Left cardiac atrium (tissue), 4 donors: ENCODE measurements at regions of chr17 and their contacts with region 1.

Region 1: GRCh38 chr17:46002311-46002972 is 3.4 kb downstream of the STH start:
- DNase-seq: peak; percentile 55
- ATAC-seq: peak; percentile 64 to 79

Region 2: GRCh38 chr17:45719335-45720071 is 282.9 kb before region 1 on chr17:
- intact Hi-C with region 1: no loop called
- DNase-seq: no peak
- ATAC-seq: peak; percentile 57 to 88

Region 3: DNA sequence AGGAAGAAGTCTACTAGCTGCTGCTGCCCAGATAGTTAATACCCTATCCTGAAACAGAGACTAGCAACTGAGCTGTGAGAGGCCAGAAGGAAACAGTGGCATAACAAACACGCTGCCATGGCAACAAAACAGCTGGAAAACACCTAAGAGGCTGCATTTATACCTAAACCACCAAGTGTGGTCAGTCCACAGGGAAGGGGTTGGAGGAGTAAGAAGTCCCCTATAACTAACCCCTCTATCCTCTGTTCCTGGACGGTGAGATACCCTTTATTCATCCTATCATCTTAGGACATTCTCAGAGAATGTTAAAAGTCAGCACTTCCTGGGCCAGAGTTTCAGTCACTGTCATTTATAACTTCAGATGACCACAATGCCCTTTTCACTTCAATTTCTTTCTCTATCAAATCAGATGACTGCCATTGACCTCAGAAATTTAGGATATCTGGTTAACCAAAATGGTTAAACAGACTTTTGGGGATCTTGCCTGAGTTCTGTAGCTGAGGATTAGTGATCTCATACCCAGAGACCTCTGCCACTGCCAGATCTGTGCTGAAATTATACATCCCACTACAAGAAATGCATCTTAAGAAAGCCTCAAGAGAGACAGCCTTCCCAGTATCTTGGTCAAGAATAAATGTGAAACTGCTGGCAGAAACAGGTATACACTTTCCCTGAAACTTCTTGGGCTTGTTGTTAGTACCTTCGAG is 32.8 kb after region 1 on chr17:
- intact Hi-C with region 1: loop called in 1 of 2 experiments (anchors 5 kb)
- DNase-seq: no peak
- ATAC-seq: no peak

Region 4: GRCh38 chr17:46212634-46213435 is 210.4 kb after region 1 on chr17:
- intact Hi-C with region 1: loop called (anchors 2 to 5 kb)
- DNase-seq: peak; percentile 69
- ATAC-seq: peak; percentile 68 to 86

Region 5: DNA sequence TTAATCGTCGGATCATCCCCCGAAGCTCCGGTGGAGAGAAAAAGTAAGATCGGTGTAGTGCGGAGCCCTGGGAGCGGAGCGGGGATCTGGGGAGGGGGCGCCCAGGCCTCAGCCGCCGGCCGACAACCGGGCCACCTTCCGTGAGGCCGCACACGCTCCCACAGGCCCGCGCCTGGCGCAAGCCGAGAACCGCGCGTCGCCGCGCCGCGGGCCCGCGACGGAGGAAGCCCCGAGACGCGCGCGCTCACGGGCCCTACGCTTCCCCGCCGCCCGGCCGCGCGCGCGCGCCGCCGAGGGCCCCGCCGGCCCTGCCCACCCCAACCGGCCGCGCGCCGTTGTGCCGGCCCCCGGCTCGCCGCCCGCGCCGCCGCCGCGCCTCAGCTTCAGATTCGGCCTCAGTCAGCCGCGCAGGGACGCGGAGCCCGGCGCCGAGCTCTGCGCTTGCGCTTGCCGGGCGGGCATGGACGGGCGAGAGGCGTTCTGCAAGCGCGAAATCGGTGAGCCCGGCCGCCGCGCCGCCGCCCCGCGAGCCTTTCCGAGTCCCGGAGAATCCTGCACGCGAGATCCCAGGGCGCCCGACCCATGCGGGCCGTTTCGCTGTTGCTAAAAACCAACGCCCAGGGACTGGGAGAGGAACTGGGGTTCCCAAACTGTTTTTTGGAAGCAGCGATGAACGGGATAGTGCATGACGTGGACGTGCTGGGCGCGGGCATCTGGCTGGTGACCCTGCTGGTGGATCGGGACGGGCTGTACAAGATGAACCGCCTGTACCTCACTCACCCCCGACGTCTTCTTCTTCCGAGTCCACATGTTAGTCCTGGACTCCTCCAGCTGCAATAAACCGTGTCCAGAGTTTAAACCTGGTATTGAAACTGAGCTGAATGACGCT is 264.5 kb after region 1 on chr17:
- intact Hi-C with region 1: loop called in 1 of 2 experiments (anchors 10 kb)
- DNase-seq: peak; percentile 88
- ATAC-seq: peak; percentile 96 to 98